WTC11 (cell line): ENCODE measurements at regions of chr6 and their contacts with region 1.

Region 1: DNA sequence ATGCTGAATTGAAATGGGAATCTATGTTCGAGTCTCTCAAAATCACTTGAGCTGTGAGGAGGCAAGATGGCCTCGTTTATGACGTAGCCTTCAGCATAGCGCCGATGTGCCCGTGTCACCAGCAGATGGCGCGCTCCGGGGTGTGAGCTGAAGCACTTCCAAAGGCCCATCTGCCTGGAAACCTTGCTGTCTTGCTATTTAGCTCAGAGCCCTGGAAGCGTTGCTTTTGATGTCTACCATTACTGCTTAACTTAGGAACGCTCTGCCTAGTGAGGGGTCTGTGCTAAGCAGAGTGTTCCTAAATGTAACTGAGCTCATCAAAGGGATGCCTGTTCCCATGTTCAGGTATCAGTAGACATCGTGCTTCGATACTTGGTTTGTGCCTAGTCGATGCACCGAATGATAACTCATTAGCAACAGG is 67.7 kb downstream of the SYCP2L start:
- DNase-seq: peak; percentile 94
- ATAC-seq: peak; percentile 96
- H3K4me3 Mint-ChIP-seq: no peak overlapping the region
- H3K27ac Mint-ChIP-seq: no peak overlapping the region
- H3K4me1 Mint-ChIP-seq: peaks cover 7% of the 10 kb centered on the region; the same call in 1 of the 2 replicates
- H3K27me3 Mint-ChIP-seq: peaks cover 20% of the 10 kb centered on the region
- CTCF ChIP-seq: peak; percentile 85

Region 2: GRCh38 chr6:10886691-10887535 is 67.7 kb before region 1 on chr6 and contains the start of gene SYCP2L:
- CTCF ChIA-PET with region 1: interaction called, 10 read pairs
- POLR2A ChIA-PET with region 1: interaction called, 3 read pairs
- DNase-seq: peak; percentile 61
- ATAC-seq: peak; percentile 73
- H3K4me3 Mint-ChIP-seq: peak within 1 kb of the TSS; percentile 91
- H3K27ac Mint-ChIP-seq: peak within 1 kb of the TSS; percentile 97
- H3K4me1 Mint-ChIP-seq: peaks cover 24% of the 10 kb centered on the region
- H3K27me3 Mint-ChIP-seq: peaks cover 61% of the 10 kb centered on the region
- CTCF ChIP-seq: no peak
- total RNA-seq, gene SYCP2L: 5.4 to 6.7 TPM (median 6.3 TPM) in 3 replicates

Region 3: GRCh38 chr6:10977231-10977968 is 22.8 kb after region 1 on chr6:
- CTCF ChIA-PET with region 1: interaction called, 19 read pairs
- POLR2A ChIA-PET with region 1: no interaction called
- DNase-seq: peak; percentile 28
- ATAC-seq: peak; percentile 92
- H3K4me3 Mint-ChIP-seq: no peak overlapping the region
- H3K27ac Mint-ChIP-seq: no peak overlapping the region
- H3K4me1 Mint-ChIP-seq: peaks cover 11% of the 10 kb centered on the region
- H3K27me3 Mint-ChIP-seq: no peaks in the 10 kb centered on the region
- CTCF ChIP-seq: no peak

Region 4: GRCh38 chr6:11011787-11012234 is 57.2 kb after region 1 on chr6:
- CTCF ChIA-PET with region 1: interaction called, 20 read pairs
- POLR2A ChIA-PET with region 1: no interaction called
- DNase-seq: peak; percentile 44
- ATAC-seq: peak; percentile 93
- H3K4me3 Mint-ChIP-seq: no peak overlapping the region
- H3K27ac Mint-ChIP-seq: 0 out of 2 replicates have a peak overlapping the region, but pooled peaks have one; percentile 43
- H3K4me1 Mint-ChIP-seq: peaks cover 30% of the 10 kb centered on the region
- H3K27me3 Mint-ChIP-seq: no peaks in the 10 kb centered on the region
- CTCF ChIP-seq: no peak

Region 5: GRCh38 chr6:11039040-11039439 is 84.4 kb after region 1 on chr6:
- CTCF ChIA-PET with region 1: interaction called, 23 read pairs
- POLR2A ChIA-PET with region 1: no interaction called
- DNase-seq: no peak
- ATAC-seq: no peak
- H3K4me3 Mint-ChIP-seq: no peak overlapping the region
- H3K27ac Mint-ChIP-seq: no peak overlapping the region
- H3K4me1 Mint-ChIP-seq: peaks cover 23% of the 10 kb centered on the region
- H3K27me3 Mint-ChIP-seq: peaks cover 36% of the 10 kb centered on the region
- CTCF ChIP-seq: no peak

Region 6: GRCh38 chr6:11064836-11065235 is 110.2 kb after region 1 on chr6:
- CTCF ChIA-PET with region 1: interaction called, 82 read pairs
- POLR2A ChIA-PET with region 1: no interaction called
- DNase-seq: no peak
- ATAC-seq: no peak
- H3K4me3 Mint-ChIP-seq: no peak overlapping the region
- H3K27ac Mint-ChIP-seq: no peak overlapping the region
- H3K4me1 Mint-ChIP-seq: peaks cover 4% of the 10 kb centered on the region
- H3K27me3 Mint-ChIP-seq: no peaks in the 10 kb centered on the region
- CTCF ChIP-seq: no peak

Region 7: GRCh38 chr6:11111769-11112437 is 157.3 kb after region 1 on chr6:
- CTCF ChIA-PET with region 1: interaction called, 10 read pairs
- POLR2A ChIA-PET with region 1: no interaction called
- DNase-seq: no peak
- ATAC-seq: no peak
- H3K4me3 Mint-ChIP-seq: no peak overlapping the region
- H3K27ac Mint-ChIP-seq: no peak overlapping the region; the same call in 1 of the 2 replicates
- H3K4me1 Mint-ChIP-seq: peaks cover 36% of the 10 kb centered on the region
- H3K27me3 Mint-ChIP-seq: no peaks in the 10 kb centered on the region
- CTCF ChIP-seq: no peak